ENCODE measurements at regions of chr20 and their contacts with region 1.

Region 1: GRCh38 chr20:54649511-54649962 is 174.1 kb downstream of the DOK5 start:
- DNase-seq: peak; percentile 63 to 93 (median 85)

Region 2: GRCh38 chr20:54103067-54103761 is 546.3 kb before region 1 on chr20:
- intact Hi-C with region 1: loop called (anchors 10 kb)
- DNase-seq: peak; percentile 12 to 87 (median 63)

Region 3: DNA sequence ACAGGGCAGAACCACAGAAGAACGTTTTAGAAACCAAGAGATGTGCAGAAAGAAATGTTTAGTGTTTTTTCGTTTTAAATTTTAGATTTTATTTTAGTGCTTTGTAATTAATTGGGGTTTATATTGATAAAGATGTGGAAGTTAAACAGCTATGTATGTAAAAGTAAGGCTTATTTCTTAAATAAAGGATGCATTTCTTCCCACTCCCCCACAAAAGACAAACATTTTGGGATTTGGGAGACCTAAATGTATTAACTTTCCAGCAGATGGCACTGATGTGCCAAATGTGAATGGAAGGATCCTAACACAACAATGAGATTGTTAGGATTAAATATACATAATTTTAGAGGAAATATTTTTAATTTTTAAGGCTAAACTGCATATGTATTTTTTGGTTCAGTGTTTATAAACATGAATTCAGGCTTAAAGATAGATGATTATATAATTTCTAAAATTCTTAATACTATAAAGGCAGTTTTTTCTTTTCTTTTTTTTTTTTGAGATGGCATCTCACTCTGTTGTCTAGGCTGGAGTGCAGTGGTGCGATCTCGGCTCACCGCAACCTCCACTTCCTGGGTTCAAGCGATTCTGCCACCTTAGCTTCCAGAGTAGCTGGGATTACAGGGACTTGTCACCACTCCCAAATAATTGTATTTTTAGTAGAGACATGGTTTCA is 429.6 kb before region 1 on chr20:
- intact Hi-C with region 1: loop called (anchors 5 kb)
- DNase-seq: peak in 5 of 42 donors; percentile 20 to 58 (median 38)

Region 4: GRCh38 chr20:54305421-54305820 is 344.1 kb before region 1 on chr20:
- intact Hi-C with region 1: no loop called
- DNase-seq: no peak

Region 5: DNA sequence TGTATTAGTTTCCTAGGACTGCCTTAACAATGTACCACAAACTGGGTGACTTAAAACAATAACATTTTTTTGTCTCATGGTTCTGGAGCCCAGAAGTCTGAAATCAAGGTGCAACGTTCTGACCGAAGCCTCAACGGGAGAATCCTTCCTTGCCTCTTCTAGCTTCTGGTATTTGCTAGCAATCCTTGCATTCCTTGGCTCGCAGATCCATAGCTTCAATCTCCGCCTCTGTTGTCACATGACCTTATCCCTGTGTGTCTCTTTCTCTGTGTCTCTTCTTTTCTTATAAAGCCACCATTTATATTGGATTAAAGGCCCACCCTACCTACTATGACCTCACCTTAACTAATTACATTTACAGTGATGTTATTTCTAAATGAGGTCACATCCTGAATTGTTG is 211.4 kb before region 1 on chr20:
- intact Hi-C with region 1: no loop called
- DNase-seq: no peak

Region 6: DNA sequence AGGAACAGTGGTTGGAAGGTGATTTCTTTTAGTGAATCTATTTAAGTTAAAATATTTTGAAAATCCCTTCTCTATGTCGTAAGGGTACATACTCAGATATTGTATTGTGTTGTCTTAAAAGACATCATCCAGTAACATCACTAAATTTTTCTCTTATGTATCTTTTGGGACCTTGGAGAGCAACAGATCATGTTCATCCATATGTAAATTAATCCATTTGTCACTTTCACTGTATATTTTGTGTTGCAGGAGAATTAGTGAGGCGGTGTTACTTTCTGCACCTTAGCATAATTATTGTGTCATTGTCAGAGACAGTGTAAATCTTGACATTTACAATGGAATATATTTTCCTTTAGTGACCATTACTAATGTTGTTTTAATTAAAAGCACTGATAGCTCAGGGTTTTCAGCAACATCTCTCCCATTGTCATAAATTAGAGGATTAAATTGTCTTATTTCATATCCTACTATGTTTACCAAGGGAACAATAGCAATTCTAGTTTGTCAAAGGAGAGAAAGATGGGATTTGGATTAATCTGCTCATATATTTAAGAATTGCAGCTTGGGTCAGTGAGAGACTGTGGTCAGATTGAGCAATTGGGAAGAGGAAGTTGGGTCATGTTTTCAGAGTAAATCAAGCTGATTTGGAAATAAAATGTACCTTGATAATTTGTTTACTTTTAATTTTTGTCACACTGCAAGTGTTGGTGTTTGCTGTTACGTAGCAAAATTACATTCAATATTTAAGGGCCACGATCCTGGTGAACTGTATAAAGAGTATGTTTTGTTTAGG is 151.4 kb before region 1 on chr20:
- intact Hi-C with region 1: no loop called
- DNase-seq: no peak

Region 7: GRCh38 chr20:54681869-54682268 is 32.3 kb after region 1 on chr20:
- intact Hi-C with region 1: no loop called
- DNase-seq: no peak